Right ventricle myocardium superior (tissue), 1 donor: ENCODE measurements at regions of chr6 and their contacts with region 1.

Region 1: DNA sequence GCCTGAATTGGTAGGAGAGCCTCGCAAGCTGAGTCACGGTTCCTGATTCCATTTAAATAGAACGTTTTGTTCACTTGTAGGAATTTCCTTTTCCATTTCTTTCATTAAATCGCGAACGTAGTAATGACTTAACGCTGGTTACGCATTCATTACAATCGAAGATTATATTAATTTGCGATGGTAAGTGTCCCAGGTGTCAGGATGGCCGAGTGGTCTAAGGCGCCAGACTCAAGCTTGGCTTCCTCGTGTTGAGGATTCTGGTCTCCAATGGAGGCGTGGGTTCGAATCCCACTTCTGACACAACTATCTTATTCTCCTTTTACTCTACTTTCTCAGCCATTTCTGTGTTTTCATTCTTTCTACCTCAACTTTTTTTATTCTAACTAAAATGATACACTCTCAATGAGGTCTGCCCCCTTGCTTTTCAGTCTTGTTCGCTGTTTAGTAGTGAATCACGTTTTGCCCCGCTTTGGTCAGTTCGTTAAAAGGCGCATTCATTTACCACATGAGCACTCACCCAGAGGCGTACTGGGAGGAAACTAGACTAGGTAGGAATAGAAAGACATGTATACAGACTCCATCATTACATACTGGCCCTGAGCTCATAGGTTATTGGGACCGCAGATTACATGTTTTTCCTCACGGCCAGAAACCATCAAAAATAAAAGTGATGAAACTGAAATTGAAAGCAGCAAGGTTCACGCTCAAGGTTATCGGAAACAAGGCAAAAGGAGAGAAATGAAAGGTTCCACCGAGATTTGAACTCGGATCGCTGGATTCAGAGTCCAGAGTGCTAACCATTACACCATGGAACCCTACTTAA is 17.3 kb upstream of the TRIM27 start:
- DNase-seq: peak; percentile 62
- ATAC-seq: peak; percentile 87

Region 2: GRCh38 chr6:28895134-28895812 is 45.8 kb before region 1 on chr6:
- intact Hi-C with region 1: loop called (anchors 5 kb)
- DNase-seq: peak; percentile 93
- ATAC-seq: peak; percentile 92